Activated B cell treated with CpG ODN at 0.5 μM for 24 hours (primary cell): ENCODE measurements at regions of chr19 and their contacts with region 1.

Region 1: DNA sequence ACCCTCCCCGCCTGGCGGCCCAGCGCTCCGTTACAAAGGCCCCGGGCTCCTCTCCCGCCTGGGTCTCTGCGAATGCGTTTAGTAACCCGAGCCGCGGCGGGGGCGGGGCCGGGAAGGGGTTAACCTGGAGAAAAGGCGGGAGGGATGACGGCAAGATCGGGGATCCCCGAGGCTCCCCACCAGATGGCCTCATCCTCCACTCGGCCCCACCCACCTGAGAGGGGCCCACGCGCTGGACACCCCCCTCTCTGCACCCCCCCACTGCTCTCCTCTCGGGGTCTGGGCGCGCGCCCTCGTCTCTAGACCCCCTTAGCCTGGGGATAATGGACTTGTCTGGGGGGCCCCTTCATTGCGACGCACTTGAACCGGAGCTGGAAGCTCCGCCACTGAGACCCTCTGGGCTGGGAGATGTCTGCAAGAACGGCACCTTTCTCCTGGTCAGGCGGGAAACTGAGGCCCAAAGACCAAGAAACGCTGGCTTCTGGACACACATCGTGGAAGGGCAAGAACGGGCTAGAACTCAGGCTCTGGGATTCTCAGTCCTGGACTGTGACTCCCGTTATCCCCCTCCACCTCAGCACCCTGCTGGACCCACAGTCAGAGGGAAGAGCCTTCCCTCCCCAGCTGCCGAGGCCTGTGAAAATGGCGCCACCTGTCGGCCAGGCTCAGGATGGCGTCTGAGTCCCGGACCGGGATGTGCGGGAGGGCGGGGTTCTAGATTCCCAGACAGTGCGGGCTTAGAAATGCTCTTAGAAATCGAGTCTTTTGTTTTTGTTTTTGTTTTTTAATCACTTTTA is 2.9 kb upstream of the LTBP4 start:
- DNase-seq: peak; percentile 82
- ATAC-seq: peak; percentile 66
- H3K4me3 Mint-ChIP-seq: no peak overlapping the region
- H3K27ac Mint-ChIP-seq: no peak overlapping the region
- H3K4me1 Mint-ChIP-seq: peaks cover 46% of the 10 kb centered on the region
- H3K27me3 Mint-ChIP-seq: peaks cover 32% of the 10 kb centered on the region
- CTCF ChIP-seq: peak; percentile 60

Region 2: GRCh38 chr19:40139533-40140287 is 458.6 kb before region 1 on chr19:
- CTCF ChIA-PET with region 1: interaction called, 5 read pairs
- POLR2A ChIA-PET with region 1: interaction called, 5 read pairs
- intact Hi-C with region 1: loop called (anchors 1 kb)
- DNase-seq: no peak
- ATAC-seq: peak; percentile 47
- H3K4me3 Mint-ChIP-seq: no peak overlapping the region
- H3K27ac Mint-ChIP-seq: no peak overlapping the region
- H3K4me1 Mint-ChIP-seq: peaks cover 33% of the 10 kb centered on the region
- H3K27me3 Mint-ChIP-seq: peaks cover 7% of the 10 kb centered on the region
- CTCF ChIP-seq: no peak

Region 3: DNA sequence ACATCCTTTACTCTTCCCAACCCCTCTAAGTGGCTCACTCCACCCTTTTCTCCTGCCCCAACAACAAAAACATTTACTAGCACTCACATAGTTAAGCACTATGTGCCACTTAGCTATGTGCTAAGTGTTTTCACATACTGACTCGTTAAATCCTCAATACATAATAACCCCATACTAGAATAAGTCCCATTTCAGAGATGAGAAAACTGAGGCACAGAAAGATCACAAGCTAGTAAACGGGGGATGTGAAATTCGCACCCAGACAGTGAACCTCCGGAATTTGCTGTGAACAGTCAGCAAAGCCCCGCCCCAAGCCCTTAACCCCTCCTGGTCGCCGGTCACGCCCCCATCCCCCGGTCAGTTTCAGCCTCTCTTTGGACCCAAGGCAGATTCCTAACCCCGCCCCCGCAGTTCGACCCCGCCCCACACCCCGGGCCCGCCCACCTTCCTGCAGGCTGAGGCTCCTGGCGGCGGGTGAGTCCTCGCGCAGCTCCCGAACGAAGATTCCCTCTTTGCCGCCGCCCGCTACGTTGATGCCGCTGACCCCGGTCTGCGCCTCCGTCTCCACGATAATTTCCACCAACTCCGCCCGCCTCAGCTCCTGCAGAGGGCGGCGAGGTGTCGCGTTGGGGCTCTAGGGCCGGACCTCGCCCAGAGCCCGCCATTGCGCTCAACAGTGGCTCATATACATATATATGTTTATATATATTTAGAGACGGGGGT is 194.9 kb before region 1 on chr19:
- CTCF ChIA-PET with region 1: no interaction called
- POLR2A ChIA-PET with region 1: no interaction called
- intact Hi-C with region 1: loop called (anchors 1 kb)
- DNase-seq: peak; percentile 86
- ATAC-seq: peak; percentile 81
- H3K4me3 Mint-ChIP-seq: peak overlapping the region; percentile 90
- H3K27ac Mint-ChIP-seq: peak overlapping the region; percentile 71
- H3K4me1 Mint-ChIP-seq: peaks cover 23% of the 10 kb centered on the region
- H3K27me3 Mint-ChIP-seq: peaks cover 3% of the 10 kb centered on the region
- CTCF ChIP-seq: no peak

Region 4: GRCh38 chr19:40529093-40529954 is 69.0 kb before region 1 on chr19:
- CTCF ChIA-PET with region 1: no interaction called
- POLR2A ChIA-PET with region 1: interaction called, 5 read pairs
- intact Hi-C with region 1: loop called (anchors 1 kb)
- DNase-seq: peak; percentile 91
- ATAC-seq: peak; percentile 91
- H3K4me3 Mint-ChIP-seq: peak overlapping the region; percentile 42
- H3K27ac Mint-ChIP-seq: no peak overlapping the region
- H3K4me1 Mint-ChIP-seq: peaks cover 18% of the 10 kb centered on the region
- H3K27me3 Mint-ChIP-seq: peaks cover 33% of the 10 kb centered on the region
- CTCF ChIP-seq: no peak

Region 5: GRCh38 chr19:40549007-40549708 is 49.2 kb before region 1 on chr19:
- CTCF ChIA-PET with region 1: interaction called, 19 read pairs
- POLR2A ChIA-PET with region 1: interaction called, 4 read pairs
- intact Hi-C with region 1: loop called (anchors 1 kb)
- DNase-seq: peak; percentile 52
- ATAC-seq: peak; percentile 85
- H3K4me3 Mint-ChIP-seq: no peak overlapping the region
- H3K27ac Mint-ChIP-seq: no peak overlapping the region
- H3K4me1 Mint-ChIP-seq: peaks cover 7% of the 10 kb centered on the region
- H3K27me3 Mint-ChIP-seq: peaks cover 38% of the 10 kb centered on the region
- CTCF ChIP-seq: no peak

Region 6: GRCh38 chr19:40576585-40577451 is 21.5 kb before region 1 on chr19 and contains the start of gene SHKBP1:
- CTCF ChIA-PET with region 1: interaction called, 5 read pairs
- POLR2A ChIA-PET with region 1: interaction called, 19 read pairs
- intact Hi-C with region 1: loop called (anchors 1 kb)
- DNase-seq: peak; percentile 89
- ATAC-seq: peak; percentile 94
- H3K4me3 Mint-ChIP-seq: peak within 1 kb of the TSS; percentile 88
- H3K27ac Mint-ChIP-seq: peak within 1 kb of the TSS; percentile 84
- H3K4me1 Mint-ChIP-seq: peaks cover 39% of the 10 kb centered on the region
- H3K27me3 Mint-ChIP-seq: no peaks in the 10 kb centered on the region
- CTCF ChIP-seq: no peak
- total RNA-seq, gene SHKBP1: 184 and 213 TPM in 2 replicates

Region 7: DNA sequence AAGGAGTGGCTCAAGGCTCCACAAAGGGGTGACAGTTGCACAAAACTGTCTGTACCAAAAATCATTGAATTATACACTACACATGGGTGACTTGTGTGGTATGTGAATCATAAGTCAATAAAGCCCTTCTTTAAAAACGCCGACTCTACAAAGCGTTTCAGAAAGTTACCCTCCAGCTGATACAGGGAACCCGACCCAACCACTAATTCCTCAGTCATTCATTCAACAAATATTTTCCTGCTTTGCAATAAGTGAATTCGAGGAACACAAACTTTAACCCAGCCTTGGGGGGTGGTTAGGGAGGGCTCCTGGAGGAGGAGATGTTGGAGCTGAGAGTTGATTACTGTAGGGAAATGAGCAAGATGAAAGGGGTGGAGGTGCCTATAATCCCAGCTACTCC is 34.9 kb after region 1 on chr19:
- CTCF ChIA-PET with region 1: interaction called, 45 read pairs
- POLR2A ChIA-PET with region 1: no interaction called
- intact Hi-C with region 1: loop called (anchors 2 kb)
- DNase-seq: no peak
- ATAC-seq: no peak
- H3K4me3 Mint-ChIP-seq: no peak overlapping the region
- H3K27ac Mint-ChIP-seq: no peak overlapping the region
- H3K4me1 Mint-ChIP-seq: peaks cover 5% of the 10 kb centered on the region
- H3K27me3 Mint-ChIP-seq: peaks cover 4% of the 10 kb centered on the region
- CTCF ChIP-seq: no peak